Activated B cell treated with CpG ODN at 0.5 μM for 24 hours (primary cell): ENCODE measurements at regions of chr4 and their contacts with region 1.

Region 1: DNA sequence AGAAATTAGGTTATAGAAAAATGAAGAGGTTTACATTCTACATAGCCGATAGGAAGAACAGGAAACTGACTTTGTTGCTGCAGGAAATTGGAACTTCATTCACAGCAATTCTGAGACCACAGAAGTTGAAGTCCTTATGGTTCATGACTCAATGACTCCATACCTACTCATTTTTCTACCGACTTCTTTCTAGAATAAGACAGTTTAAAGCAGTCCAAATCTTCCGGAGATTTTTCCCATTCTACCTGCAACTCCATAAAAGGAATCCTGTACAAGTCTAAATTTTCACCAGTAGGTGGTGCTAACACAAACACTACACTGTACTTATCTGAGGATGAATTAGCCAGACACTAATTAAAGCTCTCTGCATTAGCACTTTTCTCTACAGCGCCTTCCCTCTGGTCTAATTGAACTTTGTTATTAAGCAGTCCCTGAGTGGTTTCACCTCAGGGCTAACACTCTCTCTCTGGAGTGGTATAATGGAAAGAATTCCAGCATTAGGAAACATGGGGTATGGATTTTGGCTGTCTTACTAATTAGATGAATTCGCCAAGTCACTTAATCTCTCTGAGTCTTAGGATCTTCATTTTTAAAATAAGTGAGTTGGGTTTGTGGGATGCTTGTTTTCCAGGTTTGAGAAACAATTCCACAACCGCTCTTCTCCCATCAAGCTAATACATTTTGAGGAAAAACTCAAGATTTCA is 167.9 kb downstream of the SMIM20 start:
- DNase-seq: no peak
- ATAC-seq: peak; percentile 52
- H3K4me3 Mint-ChIP-seq: no peak overlapping the region
- H3K27ac Mint-ChIP-seq: no peak overlapping the region
- H3K4me1 Mint-ChIP-seq: peaks cover 14% of the 10 kb centered on the region
- H3K27me3 Mint-ChIP-seq: peaks cover 3% of the 10 kb centered on the region
- CTCF ChIP-seq: no peak

Region 2: GRCh38 chr4:25925486-25926201 is 156.3 kb before region 1 on chr4:
- CTCF ChIA-PET with region 1: no interaction called
- POLR2A ChIA-PET with region 1: no interaction called
- intact Hi-C with region 1: loop called (anchors 5 kb)
- DNase-seq: no peak
- ATAC-seq: peak; percentile 57
- H3K4me3 Mint-ChIP-seq: no peak overlapping the region
- H3K27ac Mint-ChIP-seq: no peak overlapping the region
- H3K4me1 Mint-ChIP-seq: no peaks in the 10 kb centered on the region
- H3K27me3 Mint-ChIP-seq: no peaks in the 10 kb centered on the region
- CTCF ChIP-seq: no peak

Region 3: DNA sequence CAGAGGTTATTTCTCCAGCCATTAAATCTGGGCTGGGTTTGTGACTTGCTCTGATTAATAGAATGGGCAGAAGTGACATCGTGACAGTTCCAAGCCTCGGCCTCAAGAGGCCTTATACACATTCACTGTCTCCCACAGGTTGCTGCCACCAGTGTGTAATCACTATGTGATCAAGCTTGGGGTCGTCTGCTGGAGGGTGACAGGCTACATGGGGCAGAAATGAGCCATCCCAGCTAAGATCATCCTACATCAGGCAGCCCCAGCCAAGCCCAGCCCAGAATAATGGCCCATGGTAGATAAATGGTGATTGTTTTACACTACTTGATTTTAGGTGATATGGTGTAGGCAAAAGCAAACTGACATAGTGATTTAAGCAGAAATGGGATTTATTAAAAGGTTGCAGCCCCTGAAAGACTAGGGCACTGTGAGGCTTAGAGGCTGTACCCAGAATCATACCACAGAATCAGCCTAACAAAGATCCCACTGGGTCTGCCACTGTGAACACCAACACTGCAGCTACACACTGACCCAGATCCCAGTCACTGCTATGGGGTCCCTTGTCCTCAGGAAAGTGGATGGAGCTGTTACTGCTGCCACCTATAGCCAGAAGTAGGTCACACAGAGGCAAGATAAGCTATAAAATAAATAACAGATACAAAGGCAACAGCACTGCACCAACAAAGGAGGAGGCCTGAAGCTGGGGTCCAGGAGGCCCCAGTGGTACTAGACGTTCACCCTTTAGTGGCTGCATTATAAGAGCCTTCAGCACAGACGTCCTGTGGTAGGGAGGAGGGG is 79.3 kb after region 1 on chr4:
- CTCF ChIA-PET with region 1: interaction called, 6 read pairs
- POLR2A ChIA-PET with region 1: no interaction called
- intact Hi-C with region 1: loop called (anchors 5 kb)
- DNase-seq: no peak
- ATAC-seq: no peak
- H3K4me3 Mint-ChIP-seq: no peak overlapping the region
- H3K27ac Mint-ChIP-seq: no peak overlapping the region
- H3K4me1 Mint-ChIP-seq: no peaks in the 10 kb centered on the region
- H3K27me3 Mint-ChIP-seq: no peaks in the 10 kb centered on the region
- CTCF ChIP-seq: no peak

Region 4: GRCh38 chr4:26197018-26197779 is 115.3 kb after region 1 on chr4:
- CTCF ChIA-PET with region 1: no interaction called
- POLR2A ChIA-PET with region 1: no interaction called
- intact Hi-C with region 1: no loop called
- DNase-seq: no peak
- ATAC-seq: peak; percentile 58
- H3K4me3 Mint-ChIP-seq: no peak overlapping the region
- H3K27ac Mint-ChIP-seq: no peak overlapping the region
- H3K4me1 Mint-ChIP-seq: peaks cover 10% of the 10 kb centered on the region
- H3K27me3 Mint-ChIP-seq: peaks cover 4% of the 10 kb centered on the region
- CTCF ChIP-seq: no peak

Region 5: GRCh38 chr4:26325191-26325590 is 243.2 kb after region 1 on chr4:
- CTCF ChIA-PET with region 1: interaction called, 29 read pairs
- POLR2A ChIA-PET with region 1: interaction called, 8 read pairs
- intact Hi-C with region 1: loop called (anchors 1 kb)
- DNase-seq: no peak
- ATAC-seq: peak; percentile 12
- H3K4me3 Mint-ChIP-seq: no peak overlapping the region
- H3K27ac Mint-ChIP-seq: no peak overlapping the region
- H3K4me1 Mint-ChIP-seq: peaks cover 28% of the 10 kb centered on the region
- H3K27me3 Mint-ChIP-seq: no peaks in the 10 kb centered on the region
- CTCF ChIP-seq: no peak

Region 6: GRCh38 chr4:26992657-26993361 is 910.9 kb after region 1 on chr4:
- CTCF ChIA-PET with region 1: no interaction called
- POLR2A ChIA-PET with region 1: no interaction called
- intact Hi-C with region 1: loop called (anchors 10 kb)
- DNase-seq: peak; percentile 26
- ATAC-seq: peak; percentile 80
- H3K4me3 Mint-ChIP-seq: no peak overlapping the region
- H3K27ac Mint-ChIP-seq: no peak overlapping the region
- H3K4me1 Mint-ChIP-seq: peaks cover 17% of the 10 kb centered on the region
- H3K27me3 Mint-ChIP-seq: no peaks in the 10 kb centered on the region
- CTCF ChIP-seq: no peak